Dendritic cell treated with granulocyte-macrophage colony-stimulating factor and Interleukin-4, amounts not matched to agents 40 ng/mL and 50 ng/mL, for 4 days (primary cell): ENCODE measurements at regions of chr5 and their contacts with region 1.

Region 1: GRCh38 chr5:149960272-149961185 is at the start of gene SLC26A2:
- H3K4me3 Mint-ChIP-seq: peak within 1 kb of the TSS; percentile 97
- H3K27ac Mint-ChIP-seq: peak within 1 kb of the TSS; percentile 93
- H3K4me1 Mint-ChIP-seq: peaks cover 37% of the 10 kb centered on the region
- H3K27me3 Mint-ChIP-seq: no peaks in the 10 kb centered on the region

Region 2: GRCh38 chr5:149975409-149975808 is 14.9 kb after region 1 on chr5:
- intact Hi-C with region 1: no loop called
- H3K4me3 Mint-ChIP-seq: no peak overlapping the region
- H3K27ac Mint-ChIP-seq: no peak overlapping the region
- H3K4me1 Mint-ChIP-seq: no peaks in the 10 kb centered on the region
- H3K27me3 Mint-ChIP-seq: no peaks in the 10 kb centered on the region

Region 3: DNA sequence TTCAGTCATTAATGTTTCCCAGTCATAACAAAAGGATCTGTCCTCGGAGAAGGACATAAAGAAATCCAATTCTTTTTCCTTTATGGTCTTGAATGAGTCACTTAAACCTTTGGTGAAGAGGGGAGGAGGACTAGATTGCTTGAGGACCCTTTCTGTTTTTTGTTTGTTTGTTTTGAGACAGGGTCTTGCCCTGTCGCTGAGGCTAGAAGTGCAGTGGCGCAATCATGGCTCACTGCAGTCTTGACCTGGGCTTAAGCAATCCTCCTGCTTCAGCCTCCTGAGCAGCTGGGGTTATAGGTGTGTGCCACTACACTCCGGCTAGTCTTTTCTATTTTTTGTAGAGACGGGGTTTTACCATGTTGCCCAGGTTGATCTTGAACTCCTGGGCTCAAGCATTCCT is 27.6 kb after region 1 on chr5:
- intact Hi-C with region 1: no loop called
- H3K4me3 Mint-ChIP-seq: no peak overlapping the region
- H3K27ac Mint-ChIP-seq: no peak overlapping the region
- H3K4me1 Mint-ChIP-seq: no peaks in the 10 kb centered on the region
- H3K27me3 Mint-ChIP-seq: no peaks in the 10 kb centered on the region

Region 4: GRCh38 chr5:150000256-150000989 is 39.9 kb after region 1 on chr5 and contains the starts of genes HMGXB3 and TIGD6:
- intact Hi-C with region 1: loop called (anchors 2 kb)
- H3K4me3 Mint-ChIP-seq: peak within 1 kb of the TSS; percentile 93
- H3K27ac Mint-ChIP-seq: peak within 1 kb of the TSS; percentile 96
- H3K4me1 Mint-ChIP-seq: peaks cover 68% of the 10 kb centered on the region
- H3K27me3 Mint-ChIP-seq: no peaks in the 10 kb centered on the region

Region 5: GRCh38 chr5:150092159-150092787 is 131.7 kb after region 1 on chr5:
- intact Hi-C with region 1: no loop called
- H3K4me3 Mint-ChIP-seq: no peak overlapping the region
- H3K27ac Mint-ChIP-seq: no peak overlapping the region
- H3K4me1 Mint-ChIP-seq: peaks cover 31% of the 10 kb centered on the region
- H3K27me3 Mint-ChIP-seq: peaks cover 2% of the 10 kb centered on the region

Region 6: DNA sequence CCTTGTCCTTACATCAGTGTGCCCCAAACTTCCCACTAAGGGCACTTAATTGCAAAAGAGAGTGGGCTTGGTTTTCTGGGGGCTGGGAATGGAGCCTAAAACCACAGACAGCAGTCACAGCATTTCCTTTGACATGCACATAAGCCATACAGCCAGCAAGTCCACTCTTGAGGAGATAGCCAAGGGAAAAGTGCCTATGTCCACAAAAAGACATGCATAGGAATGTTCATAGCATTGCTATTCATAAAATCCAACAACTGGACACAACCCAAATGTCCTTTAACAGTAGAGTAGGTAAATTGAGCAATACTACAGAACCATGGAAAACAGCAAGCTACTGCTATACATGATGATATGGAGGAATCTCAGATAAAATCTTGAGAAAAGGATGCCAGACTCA is 1642.3 kb after region 1 on chr5:
- intact Hi-C with region 1: no loop called
- H3K4me3 Mint-ChIP-seq: no peak overlapping the region
- H3K27ac Mint-ChIP-seq: no peak overlapping the region
- H3K4me1 Mint-ChIP-seq: peaks cover 4% of the 10 kb centered on the region
- H3K27me3 Mint-ChIP-seq: peaks cover 28% of the 10 kb centered on the region